ENCODE measurements at regions of chr1 and their contacts with region 1.

Region 1: GRCh38 chr1:36673202-36673601 is 190.5 kb upstream of the CSF3R start:
- DNase-seq: no peak
- H3K4me3 ChIP-seq: no peak overlapping the region
- H3K4me3 Mint-ChIP-seq: no peak overlapping the region
- H3K27ac ChIP-seq: no peak overlapping the region
- H3K27ac Mint-ChIP-seq: no peak overlapping the region
- H3K4me1 ChIP-seq: no peaks in the 10 kb centered on the region
- H3K4me1 Mint-ChIP-seq: no peaks in the 10 kb centered on the region
- H3K27me3 ChIP-seq: no peaks in the 10 kb centered on the region
- H3K27me3 Mint-ChIP-seq: peaks cover 8 to 30% of the 10 kb centered on the region in 2 donors

Region 2: DNA sequence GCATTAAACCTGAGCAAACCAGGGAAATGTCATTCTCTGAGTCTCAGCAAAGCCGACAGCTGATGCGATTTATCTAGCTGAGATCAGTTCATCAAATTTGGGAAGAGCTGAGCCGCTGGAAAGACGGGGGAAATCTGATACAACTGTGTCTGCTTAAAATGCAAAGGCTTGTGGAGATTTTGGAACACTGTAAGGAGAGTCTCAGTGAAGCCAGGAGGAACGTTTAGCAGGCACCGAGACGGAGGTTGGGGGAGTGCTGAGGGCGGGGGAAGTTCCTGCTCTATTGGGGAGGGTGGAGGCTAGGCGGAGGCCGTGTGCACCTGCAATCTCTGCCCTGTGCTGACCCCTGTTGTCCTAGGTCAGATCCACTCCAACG is 47.3 kb before region 1 on chr1:
- CTCF ChIA-PET with region 1: no interaction called
- POLR2A ChIA-PET with region 1: no interaction called
- DNase-seq: no peak
- H3K4me3 ChIP-seq: no peak overlapping the region
- H3K4me3 Mint-ChIP-seq: no peak overlapping the region
- H3K27ac ChIP-seq: no peak overlapping the region
- H3K27ac Mint-ChIP-seq: no peak overlapping the region
- H3K4me1 ChIP-seq: no peaks in the 10 kb centered on the region
- H3K4me1 Mint-ChIP-seq: peaks cover 8 to 11% (median 9%) of the 10 kb centered on the region in 3 donors
- H3K27me3 ChIP-seq: no peaks in the 10 kb centered on the region
- H3K27me3 Mint-ChIP-seq: peaks cover 14 to 47% of the 10 kb centered on the region in 2 donors

Region 3: GRCh38 chr1:36643371-36644270 is 29.6 kb before region 1 on chr1:
- CTCF ChIA-PET with region 1: no interaction called
- POLR2A ChIA-PET with region 1: interaction called, 11 read pairs
- DNase-seq: no peak
- H3K4me3 ChIP-seq: no peak overlapping the region
- H3K4me3 Mint-ChIP-seq: no peak overlapping the region
- H3K27ac ChIP-seq: no peak overlapping the region
- H3K27ac Mint-ChIP-seq: no peak overlapping the region
- H3K4me1 ChIP-seq: no peaks in the 10 kb centered on the region
- H3K4me1 Mint-ChIP-seq: no peaks in the 10 kb centered on the region
- H3K27me3 ChIP-seq: no peaks in the 10 kb centered on the region
- H3K27me3 Mint-ChIP-seq: peaks cover 3 to 48% of the 10 kb centered on the region in 2 donors